ENCODE measurements at regions of chr1 and their contacts with region 1.

Region 1: DNA sequence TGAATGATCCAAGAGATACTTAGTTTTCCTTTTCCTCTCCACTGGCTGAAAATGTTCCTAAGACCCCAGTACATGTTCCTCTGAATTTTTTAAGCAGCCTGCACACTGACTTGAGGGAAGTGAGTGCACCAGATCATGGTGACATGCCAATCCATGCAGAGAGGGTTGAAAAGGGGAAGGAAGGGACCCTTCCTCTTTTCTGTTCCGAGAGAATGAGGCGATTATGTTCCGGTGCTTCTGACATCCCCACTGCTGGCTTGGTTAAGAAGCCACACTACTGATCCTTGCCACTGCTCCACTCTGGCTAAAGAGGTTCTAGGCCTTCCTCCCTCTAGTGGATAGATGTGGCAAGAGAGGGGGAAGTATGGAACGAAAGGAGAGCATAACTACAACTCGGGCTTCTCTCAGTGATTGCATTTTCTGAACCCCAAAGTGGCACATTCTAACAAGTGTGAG is 1.8 kb upstream of the CYB5R1 start:
- DNase-seq: peak; percentile 33
- ATAC-seq: peak; percentile 78
- H3K4me3 ChIP-seq: 0 out of 2 replicates have a peak overlapping the region, but pooled peaks have one; percentile 13
- H3K27ac ChIP-seq: no peak overlapping the region
- H3K4me1 ChIP-seq: peaks cover 23% of the 10 kb centered on the region
- H3K27me3 ChIP-seq: peaks cover 0 to 2% of the 10 kb centered on the region in 2 experiments; a peak in 1 of 4 replicates
- CTCF ChIP-seq: peak; percentile 55 to 79 (median 71)
- EP300 ChIP-seq: no peak
- POLR2A ChIP-seq: no peak
- RAD21 ChIP-seq: peak; percentile 49; the same call in 1 of the 2 replicates

Region 2: GRCh38 chr1:202926720-202927491 is 42.0 kb before region 1 on chr1 and contains the start of gene KLHL12:
- CTCF ChIA-PET with region 1: interaction called, 5 read pairs
- POLR2A ChIA-PET with region 1: interaction called, 5 read pairs
- RAD21 ChIA-PET with region 1: no interaction called
- SMC1A ChIA-PET with region 1: no interaction called
- in situ Hi-C with region 1: no loop called
- intact Hi-C with region 1: loop called (anchors 2 kb)
- DNase-seq: peak; percentile 86
- ATAC-seq: peak; percentile 97
- H3K4me3 ChIP-seq: peak within 1 kb of the TSS; percentile 94
- H3K27ac ChIP-seq: peak within 1 kb of the TSS; percentile 82
- H3K4me1 ChIP-seq: no peaks in the 10 kb centered on the region; the same call in 1 of the 2 replicates
- H3K27me3 ChIP-seq: no peaks in the 10 kb centered on the region
- CTCF ChIP-seq: peak; percentile 58 to 70 (median 65)
- EP300 ChIP-seq: peak; percentile 30 to 74; a peak in 2 of 4 replicates
- POLR2A ChIP-seq: peak; percentile 97
- RAD21 ChIP-seq: peak; percentile 37; the same call in 1 of the 2 replicates
- polyA plus RNA-seq, gene KLHL12: 16.0 to 17.8 TPM

Region 3: GRCh38 chr1:202954057-202954745 is 14.7 kb before region 1 on chr1:
- CTCF ChIA-PET with region 1: interaction called, 10 read pairs
- POLR2A ChIA-PET with region 1: interaction called, 4 read pairs
- RAD21 ChIA-PET with region 1: interaction called, 4 read pairs
- SMC1A ChIA-PET with region 1: interaction called, 3 read pairs
- in situ Hi-C with region 1: no loop called
- intact Hi-C with region 1: no loop called
- DNase-seq: no peak
- ATAC-seq: no peak
- H3K4me3 ChIP-seq: no peak overlapping the region
- H3K27ac ChIP-seq: no peak overlapping the region
- H3K4me1 ChIP-seq: peaks cover 10% of the 10 kb centered on the region; the same call in 1 of the 2 replicates
- H3K27me3 ChIP-seq: no peaks in the 10 kb centered on the region
- CTCF ChIP-seq: no peak
- EP300 ChIP-seq: no peak
- POLR2A ChIP-seq: no peak
- RAD21 ChIP-seq: no peak

Region 4: GRCh38 chr1:203006948-203007871 is 38.3 kb after region 1 on chr1 and contains the start of gene TMEM183A:
- CTCF ChIA-PET with region 1: interaction called, 3 read pairs
- POLR2A ChIA-PET with region 1: interaction called, 10 read pairs
- RAD21 ChIA-PET with region 1: interaction called, 4 read pairs
- SMC1A ChIA-PET with region 1: interaction called, 8 read pairs
- in situ Hi-C with region 1: no loop called
- intact Hi-C with region 1: no loop called
- DNase-seq: peak; percentile 92
- ATAC-seq: peak; percentile 91
- H3K4me3 ChIP-seq: peak within 1 kb of the TSS; percentile 99
- H3K27ac ChIP-seq: peak within 1 kb of the TSS; percentile 96
- H3K4me1 ChIP-seq: peaks cover 5% of the 10 kb centered on the region
- H3K27me3 ChIP-seq: no peaks in the 10 kb centered on the region
- CTCF ChIP-seq: no peak
- EP300 ChIP-seq: no peak
- POLR2A ChIP-seq: peak; percentile 95
- RAD21 ChIP-seq: no peak
- polyA plus RNA-seq, gene TMEM183A: 12.3 to 25.0 TPM